Common myeloid progenitor, CD34-positive (primary cell): ENCODE measurements at regions of chr1 and their contacts with region 1.

Region 1: GRCh38 chr1:9867408-9868243 is 42.4 kb downstream of the CTNNBIP1 start:
- DNase-seq: peak; percentile 73 to 87 (median 81)
- H3K4me3 ChIP-seq: no peak overlapping the region
- H3K27ac ChIP-seq: no peak overlapping the region
- H3K4me1 ChIP-seq: no peaks in the 10 kb centered on the region
- H3K27me3 ChIP-seq: no peaks in the 10 kb centered on the region

Region 2: GRCh38 chr1:9784508-9785133 is 83.0 kb before region 1 on chr1:
- CTCF ChIA-PET with region 1: interaction called, 321 read pairs
- POLR2A ChIA-PET with region 1: no interaction called
- DNase-seq: peak; percentile 81 to 88 (median 83)
- H3K4me3 ChIP-seq: no peak overlapping the region
- H3K27ac ChIP-seq: no peak overlapping the region
- H3K4me1 ChIP-seq: peaks cover 0 to 9% (median 8%) of the 10 kb centered on the region in 4 experiments
- H3K27me3 ChIP-seq: no peaks in the 10 kb centered on the region

Region 3: DNA sequence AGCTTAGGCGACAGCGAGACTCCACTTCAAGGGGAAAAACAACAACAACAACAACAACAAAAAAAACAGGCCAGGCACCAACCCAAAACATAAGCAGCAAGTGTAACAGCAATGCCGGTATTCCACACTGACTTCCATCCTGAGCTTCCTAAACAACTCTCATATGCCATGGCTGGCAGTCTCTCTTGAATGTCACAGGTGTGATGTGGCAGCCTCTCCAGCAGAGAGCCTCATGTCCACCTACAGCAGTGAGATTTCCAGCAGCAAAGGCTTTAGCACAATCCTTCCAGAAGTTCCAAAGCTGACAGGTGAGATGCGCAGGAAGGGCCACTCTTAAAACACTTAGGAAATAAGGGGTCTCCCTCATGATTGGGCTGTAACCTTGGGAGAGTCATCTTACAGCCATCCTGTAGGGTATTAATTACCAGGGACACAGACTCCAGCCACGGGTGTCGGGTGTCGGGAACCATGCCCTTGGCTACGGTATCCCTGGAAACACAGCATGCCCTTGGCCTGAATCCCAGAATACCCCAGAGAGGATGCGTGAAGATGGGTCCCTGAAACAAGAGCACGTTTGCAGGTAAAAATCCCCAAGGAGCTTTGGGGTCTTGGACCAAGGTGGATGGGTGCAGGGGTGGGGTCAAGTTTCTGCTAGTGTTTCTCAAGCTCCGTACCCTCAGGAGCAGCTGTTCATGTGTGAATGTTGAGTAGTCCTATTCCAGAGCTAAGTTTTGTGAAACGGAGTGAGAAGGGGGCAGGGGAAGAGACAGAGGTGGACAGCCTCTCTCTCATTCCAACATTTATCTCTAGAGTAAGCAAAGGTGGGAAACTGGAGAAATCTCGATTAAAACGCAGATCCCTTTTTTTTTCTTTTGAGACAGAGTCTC is 75.2 kb before region 1 on chr1:
- CTCF ChIA-PET with region 1: interaction called, 321 read pairs
- POLR2A ChIA-PET with region 1: no interaction called
- DNase-seq: no peak
- H3K4me3 ChIP-seq: no peak overlapping the region
- H3K27ac ChIP-seq: no peak overlapping the region
- H3K4me1 ChIP-seq: peaks cover 0 to 12% (median 7%) of the 10 kb centered on the region in 4 experiments
- H3K27me3 ChIP-seq: no peaks in the 10 kb centered on the region

Region 4: GRCh38 chr1:9825454-9826090 is 42.1 kb before region 1 on chr1:
- CTCF ChIA-PET with region 1: interaction called, 20 read pairs
- POLR2A ChIA-PET with region 1: interaction called, 5 read pairs
- DNase-seq: peak; percentile 38 to 70 (median 60)
- H3K4me3 ChIP-seq: peak overlapping the region in 3 of 7 experiments; percentile 24 to 43 (median 26)
- H3K27ac ChIP-seq: no peak overlapping the region
- H3K4me1 ChIP-seq: peaks cover 8 to 38% (median 34%) of the 10 kb centered on the region in 4 experiments
- H3K27me3 ChIP-seq: no peaks in the 10 kb centered on the region

Region 5: GRCh38 chr1:9852410-9853248 is 15.0 kb before region 1 on chr1:
- CTCF ChIA-PET with region 1: interaction called, 28 read pairs
- POLR2A ChIA-PET with region 1: no interaction called
- DNase-seq: peak; percentile 20 to 40 (median 34)
- H3K4me3 ChIP-seq: peak overlapping the region in 3 of 7 experiments; percentile 2 to 87 (median 28)
- H3K27ac ChIP-seq: no peak overlapping the region
- H3K4me1 ChIP-seq: peaks cover 5 to 54% (median 38%) of the 10 kb centered on the region in 4 experiments
- H3K27me3 ChIP-seq: no peaks in the 10 kb centered on the region

Region 6: GRCh38 chr1:9910425-9911178 is 43.0 kb after region 1 on chr1:
- CTCF ChIA-PET with region 1: interaction called, 129 read pairs
- POLR2A ChIA-PET with region 1: interaction called, 3 read pairs
- DNase-seq: peak; percentile 99
- H3K4me3 ChIP-seq: peak overlapping the region; percentile 71 to 96 (median 85)
- H3K27ac ChIP-seq: peak overlapping the region; percentile 69 to 86
- H3K4me1 ChIP-seq: peaks cover 2 to 42% (median 14%) of the 10 kb centered on the region in 4 experiments
- H3K27me3 ChIP-seq: no peaks in the 10 kb centered on the region

Region 7: GRCh38 chr1:9942939-9943788 is 75.5 kb after region 1 on chr1 and contains the starts of genes LZIC and NMNAT1:
- CTCF ChIA-PET with region 1: interaction called, 45 read pairs
- POLR2A ChIA-PET with region 1: no interaction called
- DNase-seq: peak; percentile 91 to 93 (median 93)
- H3K4me3 ChIP-seq: peak within 1 kb of the TSS; percentile 80 to 98 (median 92)
- H3K27ac ChIP-seq: peak within 1 kb of the TSS; percentile 89 to 96
- H3K4me1 ChIP-seq: peaks cover 0 to 21% (median 7%) of the 10 kb centered on the region in 4 experiments
- H3K27me3 ChIP-seq: no peaks in the 10 kb centered on the region